Mammary epithelial cell (primary cell): ENCODE measurements at regions of chr22 and their contacts with region 1.

Region 1: GRCh38 chr22:21582801-21583740 is 15.6 kb downstream of the UBE2L3 start:
- DNase-seq: no peak
- H3K4me3 ChIP-seq: no peak overlapping the region
- H3K27ac ChIP-seq: no peak overlapping the region
- H3K4me1 ChIP-seq: no peaks in the 10 kb centered on the region
- H3K27me3 ChIP-seq: no peaks in the 10 kb centered on the region
- CTCF ChIP-seq: no peak

Region 2: DNA sequence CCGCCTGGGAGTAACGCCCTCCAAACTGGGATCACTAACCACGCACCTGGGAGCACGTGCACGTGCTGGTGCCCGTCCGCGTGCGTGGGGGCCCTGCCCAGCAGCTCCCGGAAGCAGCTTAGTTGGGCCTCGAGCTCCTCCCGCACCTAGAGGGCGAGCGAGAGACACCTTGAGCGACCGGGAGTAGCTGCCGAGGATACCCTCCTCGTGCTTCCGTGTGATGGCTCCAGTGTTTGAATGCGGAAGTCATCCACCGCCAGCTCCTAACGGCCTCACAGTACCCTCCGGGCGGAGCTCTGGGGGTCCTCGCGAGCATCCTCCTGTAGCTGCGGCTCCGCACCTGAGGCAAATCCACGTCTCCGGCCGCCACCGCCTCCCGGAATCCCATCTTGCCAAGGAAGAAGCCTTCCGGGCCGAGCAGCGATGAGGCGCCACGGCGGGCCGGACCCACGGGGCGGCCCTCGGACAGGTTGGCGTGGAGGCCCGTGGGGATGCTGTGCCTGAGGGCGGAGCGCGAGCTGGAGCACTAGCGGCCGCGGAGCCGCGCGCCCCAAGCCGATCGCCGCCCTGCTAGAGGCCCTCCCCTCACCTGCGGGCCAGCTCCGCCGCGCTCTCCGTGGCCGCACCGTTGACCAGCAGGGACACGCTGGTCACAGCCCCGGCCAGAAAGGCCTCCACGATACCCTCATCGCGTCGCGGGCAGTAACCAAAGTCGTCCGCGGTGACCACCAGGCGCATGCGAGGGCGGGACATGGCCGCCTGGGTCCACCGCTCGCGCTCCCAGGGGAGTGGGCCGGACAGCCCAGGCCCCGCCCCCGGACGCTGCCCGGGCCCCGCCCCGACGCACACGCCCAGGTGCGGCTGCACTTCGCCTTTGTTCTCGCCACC is 46.4 kb after region 1 on chr22 and contains the start of gene YDJC:
- CTCF ChIA-PET with region 1: no interaction called
- dilution Hi-C with region 1: loop called (anchors 5 kb)
- in situ Hi-C with region 1: loop called in 1 of 2 experiments (anchors 5 kb)
- intact Hi-C with region 1: no loop called
- DNase-seq: peak; percentile 89
- H3K4me3 ChIP-seq: peak within 1 kb of the TSS; percentile 79 to 100 (median 98)
- H3K27ac ChIP-seq: peak within 1 kb of the TSS; percentile 72
- H3K4me1 ChIP-seq: peaks cover 16% of the 10 kb centered on the region
- H3K27me3 ChIP-seq: no peaks in the 10 kb centered on the region
- CTCF ChIP-seq: peak; percentile 56 to 77
- total RNA-seq, gene YDJC: 33.8 to 47.6 TPM